ENCODE measurements at regions of chr1 and their contacts with region 1.

Region 1: DNA sequence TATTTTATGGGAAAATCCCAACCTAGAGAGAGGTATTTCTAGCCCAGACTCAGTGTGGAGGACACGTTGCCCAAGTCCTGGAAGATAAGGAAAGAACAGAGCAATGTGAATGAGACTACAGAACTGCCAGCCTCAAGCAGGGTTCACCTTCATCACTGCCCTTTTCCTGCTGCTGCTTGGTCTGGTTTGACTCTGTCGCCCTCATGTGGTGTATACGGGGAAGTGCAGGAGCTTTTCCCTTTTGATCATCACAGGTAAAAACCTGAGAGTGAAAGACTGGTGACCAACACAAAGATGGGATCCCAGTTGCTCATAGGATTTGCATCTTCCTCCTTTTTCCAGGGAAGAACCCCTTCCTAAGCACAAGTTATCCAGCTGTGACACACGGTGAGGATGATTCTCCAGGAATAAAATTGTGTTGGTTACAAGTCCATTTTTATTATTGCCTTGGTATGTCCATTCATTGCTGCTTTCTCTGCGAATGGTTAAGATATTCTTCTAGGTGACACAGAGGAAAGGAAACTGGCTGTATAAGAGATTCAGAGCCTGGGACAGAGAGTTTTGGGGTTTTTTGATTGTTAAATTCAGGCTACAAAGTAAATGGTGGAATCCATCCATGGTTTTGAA is 89.5 kb upstream of the CD53 start:
- DNase-seq: peak; percentile 73
- ATAC-seq: peak; percentile 70
- H3K4me3 ChIP-seq: no peak overlapping the region
- H3K27ac ChIP-seq: no peak overlapping the region
- H3K4me1 ChIP-seq: no peaks in the 10 kb centered on the region
- H3K27me3 ChIP-seq: peaks cover 34% of the 10 kb centered on the region
- CTCF ChIP-seq: peak; percentile 92

Region 2: GRCh38 chr1:110630839-110631663 is 152.4 kb before region 1 on chr1:
- CTCF ChIA-PET with region 1: interaction called, 3 read pairs
- POLR2A ChIA-PET with region 1: no interaction called
- intact Hi-C with region 1: loop called (anchors 1 kb)
- DNase-seq: peak; percentile 80
- ATAC-seq: peak; percentile 99
- H3K4me3 ChIP-seq: no peak overlapping the region
- H3K27ac ChIP-seq: no peak overlapping the region
- H3K4me1 ChIP-seq: no peaks in the 10 kb centered on the region
- H3K27me3 ChIP-seq: peaks cover 5% of the 10 kb centered on the region; the same call in 1 of the 2 replicates
- CTCF ChIP-seq: peak; percentile 85

Region 3: DNA sequence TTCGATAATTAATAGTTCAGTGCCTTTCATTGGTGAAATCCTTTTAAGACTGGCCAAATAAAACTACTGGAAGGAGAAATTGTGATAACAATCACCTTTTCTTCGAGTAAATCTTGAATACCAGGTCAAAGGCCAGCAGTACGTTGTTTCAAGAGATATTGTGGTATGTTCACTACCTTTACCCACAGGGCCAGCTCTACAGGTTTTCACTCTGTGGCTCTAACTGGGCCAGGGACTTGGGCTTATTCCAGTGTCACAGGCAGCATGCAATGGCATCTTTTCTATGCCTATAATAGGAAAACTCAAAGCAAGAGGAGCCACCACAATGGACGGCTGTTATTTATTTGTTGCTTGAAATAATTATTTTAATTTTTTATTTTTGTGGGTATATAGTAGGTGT is 207.1 kb after region 1 on chr1:
- CTCF ChIA-PET with region 1: interaction called, 4 read pairs
- POLR2A ChIA-PET with region 1: no interaction called
- intact Hi-C with region 1: loop called (anchors 1 kb)
- DNase-seq: no peak
- ATAC-seq: no peak
- H3K4me3 ChIP-seq: no peak overlapping the region
- H3K27ac ChIP-seq: no peak overlapping the region
- H3K4me1 ChIP-seq: no peaks in the 10 kb centered on the region
- H3K27me3 ChIP-seq: peaks cover 34% of the 10 kb centered on the region
- CTCF ChIP-seq: no peak

Region 4: DNA sequence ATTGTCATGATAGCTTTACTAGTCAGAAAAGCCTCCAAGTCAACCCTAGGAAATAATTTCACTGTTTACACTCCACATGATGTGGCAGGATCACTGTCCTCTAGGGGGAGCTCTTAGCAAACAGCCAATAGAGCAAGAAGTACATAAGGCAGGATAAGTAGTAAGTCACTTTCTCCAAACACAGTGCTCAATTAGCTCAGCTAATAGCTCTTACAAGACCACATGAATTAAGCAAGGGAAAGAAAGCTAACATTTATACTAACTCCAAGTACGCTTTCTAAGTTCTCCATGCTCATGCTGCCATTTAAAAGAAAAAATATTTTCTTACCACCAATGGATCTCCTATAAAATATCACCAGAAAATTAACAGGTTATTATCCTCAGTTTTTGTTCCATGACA is 247.2 kb after region 1 on chr1:
- CTCF ChIA-PET with region 1: no interaction called
- POLR2A ChIA-PET with region 1: no interaction called
- intact Hi-C with region 1: loop called (anchors 1 kb)
- DNase-seq: peak; percentile 80
- ATAC-seq: peak; percentile 92
- H3K4me3 ChIP-seq: no peak overlapping the region
- H3K27ac ChIP-seq: no peak overlapping the region
- H3K4me1 ChIP-seq: no peaks in the 10 kb centered on the region
- H3K27me3 ChIP-seq: no peaks in the 10 kb centered on the region
- CTCF ChIP-seq: peak; percentile 95